Left ventricle myocardium superior (tissue), 1 donor: ENCODE measurements at regions of chr17 and their contacts with region 1.

Region 1: GRCh38 chr17:61002316-61002736 is 324.7 kb downstream of the BCAS3 start:
- DNase-seq: no peak
- ATAC-seq: peak; percentile 25

Region 2: DNA sequence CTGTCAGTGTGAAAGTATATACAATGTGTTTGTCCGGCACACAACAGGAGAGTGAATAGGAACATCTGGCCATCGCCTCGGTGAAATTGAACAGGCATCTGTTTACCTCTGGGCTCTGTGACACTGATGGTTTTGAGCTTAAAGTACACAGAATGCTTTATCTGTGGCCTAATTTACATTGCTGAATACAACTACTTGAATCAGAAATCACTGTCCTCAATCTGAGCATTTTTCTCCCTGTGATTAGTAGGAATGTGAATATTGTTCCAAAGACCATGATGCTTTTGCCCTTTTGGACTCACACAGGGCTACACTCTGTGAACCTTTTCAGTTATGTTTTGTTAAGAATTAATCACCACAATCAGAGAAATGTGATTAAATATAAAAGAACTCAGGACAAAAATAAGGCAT is 74.3 kb after region 1 on chr17:
- intact Hi-C with region 1: no loop called
- DNase-seq: no peak
- ATAC-seq: no peak

Region 3: GRCh38 chr17:61389670-61390478 is 387.5 kb after region 1 on chr17:
- intact Hi-C with region 1: loop called (anchors 10 kb)
- DNase-seq: peak; percentile 82
- ATAC-seq: peak; percentile 69